GM23248 (cell line): ENCODE measurements at regions of chr14 and their contacts with region 1.

Region 1: DNA sequence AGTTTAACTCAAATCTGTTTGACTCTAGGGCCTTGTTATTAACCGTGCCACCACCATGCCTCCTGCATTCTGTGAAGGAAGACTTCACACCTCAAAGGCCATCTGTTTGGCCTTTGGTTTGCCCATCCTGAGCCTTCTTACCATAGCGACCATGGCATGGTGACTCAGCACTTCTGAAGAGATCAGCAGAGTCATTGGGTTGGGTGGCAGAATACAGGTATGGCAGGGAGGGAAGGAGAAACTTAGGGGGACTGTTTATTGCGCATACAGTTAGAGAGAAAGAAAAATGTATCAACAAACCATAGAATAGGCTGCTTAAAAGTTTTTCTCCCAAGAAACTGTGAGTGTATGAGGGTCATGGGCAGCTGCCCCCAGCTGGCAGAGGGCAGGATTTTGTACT is 49.2 kb downstream of the DAD1 start:
- DNase-seq: no peak
- H3K4me3 ChIP-seq: no peak overlapping the region
- H3K27ac ChIP-seq: no peak overlapping the region
- H3K4me1 ChIP-seq: peaks cover 14% of the 10 kb centered on the region
- H3K27me3 ChIP-seq: no peaks in the 10 kb centered on the region

Region 2: GRCh38 chr14:22163051-22163450 is 376.8 kb before region 1 on chr14:
- in situ Hi-C with region 1: no loop called
- DNase-seq: peak; percentile 4
- H3K4me3 ChIP-seq: no peak overlapping the region
- H3K27ac ChIP-seq: no peak overlapping the region
- H3K4me1 ChIP-seq: no peaks in the 10 kb centered on the region
- H3K27me3 ChIP-seq: no peaks in the 10 kb centered on the region; the same call in 1 of the 2 replicates

Region 3: GRCh38 chr14:22478670-22479069 is 61.2 kb before region 1 on chr14:
- in situ Hi-C with region 1: loop called (anchors 5 kb)
- DNase-seq: no peak
- H3K4me3 ChIP-seq: no peak overlapping the region
- H3K27ac ChIP-seq: no peak overlapping the region
- H3K4me1 ChIP-seq: peaks cover 8% of the 10 kb centered on the region
- H3K27me3 ChIP-seq: peaks cover 23% of the 10 kb centered on the region